ENCODE measurements at regions of chr13 and their contacts with region 1.

Region 1: GRCh38 chr13:32586080-32586900 is at the start of gene PDS5B:
- DNase-seq: peak; percentile 96
- ATAC-seq: peak; percentile 97 to 99 (median 98)
- H3K4me3 ChIP-seq: peak within 1 kb of the TSS; percentile 55 to 90 (median 82)
- H3K27ac ChIP-seq: peak within 1 kb of the TSS; percentile 90 to 96 (median 93)
- H3K4me1 ChIP-seq: peaks cover 0 to 42% (median 28%) of the 10 kb centered on the region in 9 donors
- H3K27me3 ChIP-seq: no peaks in the 10 kb centered on the region
- CTCF ChIP-seq: peak; percentile 79 to 99 (median 94)
- total RNA-seq, gene PDS5B: 16.3 to 29.6 (median 20.6) TPM

Region 2: GRCh38 chr13:32616883-32617511 is 30.7 kb after region 1 on chr13:
- intact Hi-C with region 1: loop called in 1 of 10 experiments (anchors 2 kb)
- DNase-seq: no peak
- ATAC-seq: no peak
- H3K4me3 ChIP-seq: no peak overlapping the region
- H3K27ac ChIP-seq: no peak overlapping the region
- H3K4me1 ChIP-seq: peaks cover 0 to 8% (median 0%) of the 10 kb centered on the region in 9 donors
- H3K27me3 ChIP-seq: no peaks in the 10 kb centered on the region
- CTCF ChIP-seq: no peak

Region 3: DNA sequence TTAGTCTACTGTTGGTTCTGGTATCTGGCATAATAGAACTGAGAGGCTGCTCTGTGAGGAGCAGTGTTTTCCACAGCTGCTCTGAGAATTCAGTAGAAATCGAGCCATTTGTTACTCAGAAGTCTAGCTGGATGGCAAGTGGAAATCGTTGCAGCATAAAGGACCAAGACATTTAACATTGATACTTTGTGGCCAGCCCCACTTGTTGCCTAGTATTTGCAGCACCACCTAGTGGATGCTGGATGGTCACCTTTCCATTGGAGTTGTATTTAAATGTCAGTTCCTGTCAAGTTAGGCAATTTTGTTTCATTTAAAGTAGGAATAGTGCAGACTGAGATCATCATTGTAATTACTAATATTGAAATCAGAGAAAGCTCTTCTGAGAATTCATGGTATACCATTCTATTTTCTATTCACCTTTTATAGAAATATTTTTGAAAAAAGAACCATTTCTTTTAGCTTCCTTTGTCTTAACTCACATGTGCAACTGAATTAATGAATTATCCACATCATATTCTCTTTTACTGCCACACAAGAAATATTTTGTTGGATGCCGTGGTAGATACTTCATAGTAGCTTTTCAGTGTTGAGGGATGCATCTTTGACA is 64.5 kb after region 1 on chr13:
- intact Hi-C with region 1: loop called in 3 of 10 experiments (anchors 2 to 5 kb)
- DNase-seq: peak in 1 of 2 donors; percentile 53
- ATAC-seq: peak in 7 of 8 donors; percentile 49 to 85 (median 77)
- H3K4me3 ChIP-seq: no peak overlapping the region
- H3K27ac ChIP-seq: no peak overlapping the region
- H3K4me1 ChIP-seq: peaks cover 3 to 37% (median 26%) of the 10 kb centered on the region in 9 donors
- H3K27me3 ChIP-seq: no peaks in the 10 kb centered on the region
- CTCF ChIP-seq: peak in 8 of 9 donors; percentile 53 to 83 (median 72)

Region 4: GRCh38 chr13:33017323-33017929 is 431.1 kb after region 1 on chr13:
- intact Hi-C with region 1: loop called in 4 of 10 experiments (anchors 2 to 5 kb)
- DNase-seq: peak; percentile 35 to 62
- ATAC-seq: peak; percentile 72 to 86 (median 82)
- H3K4me3 ChIP-seq: peak overlapping the region; percentile 55 to 71 (median 64)
- H3K27ac ChIP-seq: peak overlapping the region; percentile 78 to 95 (median 91)
- H3K4me1 ChIP-seq: peaks cover 0 to 44% (median 17%) of the 10 kb centered on the region in 9 donors
- H3K27me3 ChIP-seq: peaks cover 0 to 38% (median 0%) of the 10 kb centered on the region in 7 donors
- CTCF ChIP-seq: peak; percentile 27 to 75 (median 62)

Region 5: DNA sequence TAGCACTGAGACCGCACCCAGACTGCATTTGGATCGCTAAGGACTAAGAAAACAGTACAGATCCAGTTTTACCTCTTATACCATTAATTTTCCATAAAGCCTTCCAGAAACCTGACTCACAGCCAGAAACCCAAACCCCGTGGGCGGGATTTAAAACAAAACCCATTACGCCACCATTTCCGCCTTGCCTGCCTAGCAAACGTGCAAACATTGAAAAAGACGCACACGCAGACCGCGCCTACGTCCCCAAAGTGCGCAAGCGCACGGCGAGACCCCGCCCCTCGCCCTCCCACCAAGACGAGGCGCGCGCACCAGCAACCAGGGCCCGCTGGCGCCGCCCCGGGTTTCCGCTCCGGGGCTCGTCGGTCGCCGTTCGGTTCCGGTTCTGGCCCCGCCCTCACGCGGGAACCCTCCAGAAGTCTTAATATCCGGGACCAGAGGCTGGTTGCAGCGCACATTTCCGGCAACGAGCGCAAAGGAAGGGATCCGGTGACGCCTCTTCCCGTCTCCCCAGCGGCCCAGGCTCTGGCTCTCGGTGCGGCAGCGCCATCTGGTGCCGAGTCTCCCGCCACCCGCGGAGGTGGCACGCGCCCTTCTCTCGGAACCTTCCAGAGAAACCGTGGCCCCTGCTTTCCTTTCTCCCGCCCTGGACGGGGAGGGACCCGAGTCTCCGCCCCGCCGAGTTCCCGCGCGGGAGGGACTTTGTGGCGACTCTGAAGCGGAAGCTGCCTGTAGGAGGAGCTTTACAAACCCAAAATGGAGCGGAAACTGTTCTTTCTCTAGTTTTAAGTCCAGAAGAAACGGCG is 956.2 kb after region 1 on chr13:
- intact Hi-C with region 1: loop called in 7 of 10 experiments (anchors 1 to 5 kb)
- DNase-seq: peak; percentile 98 to 99
- ATAC-seq: peak; percentile 94 to 98 (median 96)
- H3K4me3 ChIP-seq: peak overlapping the region; percentile 11 to 62 (median 52)
- H3K27ac ChIP-seq: peak overlapping the region; percentile 92 to 99 (median 96)
- H3K4me1 ChIP-seq: peaks cover 2 to 45% (median 33%) of the 10 kb centered on the region in 9 donors
- H3K27me3 ChIP-seq: no peaks in the 10 kb centered on the region
- CTCF ChIP-seq: peak; percentile 75 to 97 (median 92)

Measured in heart right ventricle (tissue), 16 donors.